Activated naive CD4-positive, alpha-beta T cell treated with anti-CD3 and anti-CD28 coated beads for 36 hours (primary cell): ENCODE measurements at regions of chr17 and their contacts with region 1.

Region 1: DNA sequence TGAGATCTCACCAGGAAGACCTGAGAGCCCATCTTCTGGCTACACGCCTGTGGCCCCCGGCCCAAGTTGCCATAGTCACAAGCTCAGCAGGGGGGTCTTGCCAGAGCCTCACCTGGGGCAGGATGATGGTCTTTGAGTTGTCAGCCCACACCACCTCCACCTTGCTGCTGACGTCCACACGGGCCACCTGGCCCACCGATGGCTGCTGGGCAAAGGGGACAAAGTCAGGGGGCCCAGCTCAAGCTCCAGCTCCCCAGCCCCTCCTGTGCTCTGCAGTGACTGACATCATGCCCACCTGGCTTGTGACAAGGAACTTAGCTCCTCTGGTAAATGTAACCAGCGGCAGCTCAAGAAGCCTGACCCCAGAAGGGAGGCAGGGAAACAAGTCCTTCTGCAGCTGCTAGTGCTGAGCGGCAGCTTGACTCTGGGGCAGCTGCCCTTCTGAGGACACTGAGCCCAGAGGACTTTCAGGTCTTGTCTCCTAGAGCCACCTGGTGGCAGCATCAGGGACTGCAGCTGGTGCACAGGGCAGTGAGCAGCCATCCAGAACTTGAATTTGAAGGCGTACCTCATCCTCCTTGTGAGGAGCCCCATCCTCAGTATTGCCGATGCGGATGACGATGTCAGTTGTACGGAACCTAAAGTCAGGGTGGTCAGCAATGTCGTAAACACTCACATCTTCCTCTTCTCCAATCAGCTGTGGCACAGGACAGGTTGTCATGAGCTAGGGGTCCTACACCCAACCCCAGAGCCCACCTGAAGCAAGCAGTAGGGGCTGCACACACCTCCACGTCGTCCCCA is 13.5 kb downstream of the SPHK1 start:
- DNase-seq: peak; percentile 93
- H3K4me3 Mint-ChIP-seq: no peak overlapping the region
- H3K27ac Mint-ChIP-seq: no peak overlapping the region
- H3K4me1 Mint-ChIP-seq: no peaks in the 10 kb centered on the region
- H3K27me3 Mint-ChIP-seq: no peaks in the 10 kb centered on the region

Region 2: GRCh38 chr17:76121932-76122430 is 275.9 kb before region 1 on chr17:
- CTCF ChIA-PET with region 1: interaction called, 10 read pairs
- intact Hi-C with region 1: no loop called
- DNase-seq: peak; percentile 39
- H3K4me3 Mint-ChIP-seq: peak overlapping the region; percentile 21
- H3K27ac Mint-ChIP-seq: peak overlapping the region; percentile 80
- H3K4me1 Mint-ChIP-seq: peaks cover 19% of the 10 kb centered on the region
- H3K27me3 Mint-ChIP-seq: no peaks in the 10 kb centered on the region

Region 3: DNA sequence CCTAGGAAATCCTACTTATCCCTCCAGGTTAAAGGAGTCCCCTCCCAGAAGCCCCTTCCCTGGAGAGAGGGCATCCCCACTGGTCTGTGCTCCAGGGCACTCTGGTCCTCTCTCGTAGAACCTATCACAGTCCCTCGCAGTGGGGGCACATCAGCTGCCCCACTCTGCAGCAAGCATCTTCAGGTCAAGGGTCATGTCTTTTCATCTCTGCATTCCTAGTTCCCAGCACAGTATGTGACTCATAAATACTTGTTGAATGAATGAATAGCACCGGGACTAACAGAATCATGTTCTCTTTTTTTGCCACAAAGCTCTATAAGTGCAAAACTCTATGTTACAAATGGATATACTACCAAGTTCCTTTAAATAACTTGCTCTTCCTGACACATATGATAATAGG is 193.6 kb before region 1 on chr17:
- CTCF ChIA-PET with region 1: no interaction called
- intact Hi-C with region 1: no loop called
- DNase-seq: no peak
- H3K4me3 Mint-ChIP-seq: no peak overlapping the region
- H3K27ac Mint-ChIP-seq: no peak overlapping the region
- H3K4me1 Mint-ChIP-seq: peaks cover 54% of the 10 kb centered on the region
- H3K27me3 Mint-ChIP-seq: no peaks in the 10 kb centered on the region

Region 4: DNA sequence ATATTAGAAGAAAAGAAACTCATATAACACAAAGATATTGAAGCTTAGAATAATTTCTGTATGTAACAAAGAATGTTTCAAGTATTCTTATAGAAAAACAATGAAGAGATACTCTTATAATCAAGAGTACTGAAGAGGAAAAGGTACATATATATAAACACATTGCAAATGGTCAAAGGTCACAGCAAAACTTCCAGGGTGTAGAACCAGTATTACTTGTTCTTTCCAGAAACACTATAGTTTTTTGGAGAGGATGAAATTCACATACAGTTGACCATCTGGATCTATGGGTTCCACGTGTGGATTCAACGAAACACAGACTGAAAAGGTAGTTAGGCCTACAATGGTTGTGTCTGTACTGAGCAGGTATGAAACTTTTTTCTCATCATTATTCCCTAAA is 66.8 kb before region 1 on chr17:
- CTCF ChIA-PET with region 1: interaction called, 19 read pairs
- intact Hi-C with region 1: no loop called
- DNase-seq: no peak
- H3K4me3 Mint-ChIP-seq: no peak overlapping the region
- H3K27ac Mint-ChIP-seq: no peak overlapping the region
- H3K4me1 Mint-ChIP-seq: no peaks in the 10 kb centered on the region
- H3K27me3 Mint-ChIP-seq: no peaks in the 10 kb centered on the region

Region 5: DNA sequence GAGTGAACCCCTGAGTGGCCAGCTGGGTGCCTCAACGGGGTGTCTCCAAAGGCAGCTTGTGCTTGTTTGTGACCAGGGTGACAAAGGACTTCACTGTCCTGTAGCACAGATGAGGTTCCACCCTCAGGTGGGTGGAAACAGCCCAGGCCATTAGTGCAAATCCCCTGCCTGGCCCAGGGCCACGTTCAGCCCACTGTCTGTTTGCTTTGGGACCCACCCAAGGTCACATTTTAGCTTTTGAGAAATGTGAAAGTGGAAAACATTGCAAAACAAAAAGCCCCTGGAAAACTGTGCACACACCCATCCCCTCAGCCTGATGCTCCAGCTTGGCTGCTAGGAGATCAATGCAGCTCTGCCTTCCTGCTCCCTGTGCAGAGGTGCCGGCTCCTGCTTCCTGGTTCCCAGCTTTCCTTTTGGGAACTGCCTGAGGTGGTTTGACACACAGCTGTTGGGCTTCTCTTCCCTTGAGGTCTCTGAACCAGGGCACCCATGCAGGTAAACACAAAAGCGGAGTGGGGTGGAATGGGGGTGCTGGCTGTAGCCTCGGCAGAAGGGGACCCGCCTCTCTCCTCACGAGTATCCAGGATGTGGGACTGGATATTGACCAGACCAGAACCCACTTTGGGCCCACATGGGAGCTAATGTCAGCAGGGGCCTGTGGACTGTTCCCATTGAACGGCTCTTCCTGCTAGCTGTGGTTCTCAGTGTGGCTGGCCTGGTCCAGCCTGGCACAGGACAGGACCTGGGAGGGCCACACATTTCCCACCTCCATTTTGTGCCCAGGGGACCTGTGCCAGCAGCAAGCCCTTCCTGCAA is 21.4 kb before region 1 on chr17:
- CTCF ChIA-PET with region 1: interaction called, 51 read pairs
- intact Hi-C with region 1: no loop called
- DNase-seq: no peak
- H3K4me3 Mint-ChIP-seq: no peak overlapping the region
- H3K27ac Mint-ChIP-seq: no peak overlapping the region
- H3K4me1 Mint-ChIP-seq: no peaks in the 10 kb centered on the region
- H3K27me3 Mint-ChIP-seq: no peaks in the 10 kb centered on the region

Region 6: GRCh38 chr17:76408052-76408849 is 10.4 kb after region 1 on chr17:
- CTCF ChIA-PET with region 1: interaction called, 29 read pairs
- intact Hi-C with region 1: no loop called
- DNase-seq: peak; percentile 86
- H3K4me3 Mint-ChIP-seq: no peak overlapping the region
- H3K27ac Mint-ChIP-seq: no peak overlapping the region
- H3K4me1 Mint-ChIP-seq: peaks cover 8% of the 10 kb centered on the region
- H3K27me3 Mint-ChIP-seq: no peaks in the 10 kb centered on the region

Region 7: GRCh38 chr17:76506408-76507349 is 108.8 kb after region 1 on chr17:
- CTCF ChIA-PET with region 1: interaction called, 12 read pairs
- intact Hi-C with region 1: no loop called
- DNase-seq: peak; percentile 94
- H3K4me3 Mint-ChIP-seq: no peak overlapping the region
- H3K27ac Mint-ChIP-seq: no peak overlapping the region
- H3K4me1 Mint-ChIP-seq: peaks cover 7% of the 10 kb centered on the region
- H3K27me3 Mint-ChIP-seq: peaks cover 2% of the 10 kb centered on the region